Activated B cell treated with CpG ODN at 0.5 μM for 24 hours (primary cell): ENCODE measurements at regions of chr3 and their contacts with region 1.

Region 1: DNA sequence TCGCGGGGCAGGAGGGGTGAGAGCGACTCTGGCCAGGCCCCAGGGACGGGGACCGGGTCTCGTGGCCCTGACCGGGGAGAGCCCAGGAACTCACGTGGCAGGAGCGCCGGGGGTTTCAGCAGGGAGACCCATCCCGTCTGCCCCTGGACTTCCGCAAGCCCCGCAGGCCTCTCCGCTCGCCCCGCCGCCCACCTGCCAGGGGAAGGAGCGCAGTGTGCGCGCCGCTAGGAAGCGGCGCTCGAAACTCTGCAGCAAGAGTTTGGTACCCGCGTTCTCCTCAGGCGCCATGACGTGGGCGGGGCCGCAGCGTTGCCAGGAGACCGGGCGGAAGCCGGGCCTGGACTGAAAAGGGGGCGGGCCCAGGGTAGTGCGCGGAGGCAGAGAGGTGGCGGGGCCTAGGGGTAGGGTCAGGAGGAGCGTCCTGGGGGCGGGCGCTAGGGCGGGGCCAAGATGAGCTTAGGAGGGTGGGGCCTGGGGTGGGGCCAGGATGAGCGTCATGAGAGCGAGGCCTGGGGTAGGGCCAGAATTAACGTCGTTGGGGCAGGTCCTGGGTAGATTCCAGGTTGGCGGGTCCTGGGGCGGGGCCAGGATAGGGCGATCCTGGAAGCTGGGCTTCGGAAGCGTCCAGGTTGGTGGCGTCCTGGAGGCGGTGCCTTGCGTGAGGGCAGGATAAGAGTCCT is 29.7 kb downstream of the ALG1L2 start:
- DNase-seq: peak; percentile 94
- ATAC-seq: peak; percentile 100
- H3K4me3 Mint-ChIP-seq: peak overlapping the region; percentile 98
- H3K27ac Mint-ChIP-seq: peak overlapping the region; percentile 100
- H3K4me1 Mint-ChIP-seq: peaks cover 25% of the 10 kb centered on the region
- H3K27me3 Mint-ChIP-seq: no peaks in the 10 kb centered on the region
- CTCF ChIP-seq: no peak

Region 2: DNA sequence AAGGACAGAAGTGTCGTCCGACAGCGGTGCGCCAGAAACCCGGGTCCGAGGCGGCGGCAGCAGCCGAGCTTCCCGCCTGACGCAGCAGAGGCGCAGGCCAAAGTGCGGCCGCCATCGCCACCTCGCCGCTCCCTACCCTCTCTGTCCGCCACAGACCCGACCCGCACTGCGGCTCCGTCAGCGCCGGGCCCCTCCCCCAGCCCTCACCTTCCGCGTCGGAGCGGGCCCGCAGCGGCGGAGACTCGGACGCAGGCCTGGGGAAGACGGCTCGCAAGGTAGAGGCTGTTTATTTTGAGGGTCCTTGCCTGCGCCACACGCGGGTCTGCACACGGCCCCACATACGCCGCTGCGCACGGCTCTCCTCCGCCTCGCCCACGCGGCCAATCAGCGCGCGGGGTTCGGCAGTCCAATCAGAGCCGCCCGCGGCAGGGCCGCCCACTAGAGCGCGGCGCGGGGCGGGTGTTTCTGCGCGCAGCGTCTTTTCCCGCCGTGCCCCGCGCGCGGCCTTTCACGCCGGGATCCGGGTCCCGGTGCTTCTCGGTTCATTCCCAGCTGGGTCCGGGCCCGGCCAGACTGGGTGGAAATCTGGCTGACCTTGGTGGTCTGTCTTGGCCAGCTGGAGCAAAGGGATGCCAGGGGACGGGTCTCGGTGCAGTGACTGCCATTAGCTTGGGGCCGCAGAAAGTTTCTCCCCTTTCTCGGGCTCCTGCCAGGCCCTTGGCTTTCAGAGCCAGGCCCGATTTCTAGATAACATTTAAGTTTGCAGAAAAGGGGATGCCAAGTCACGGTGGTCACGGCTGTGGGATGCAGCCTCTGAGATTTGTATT is 927.5 kb before region 1 on chr3 and contains the start of gene CNBP:
- CTCF ChIA-PET with region 1: no interaction called
- POLR2A ChIA-PET with region 1: no interaction called
- intact Hi-C with region 1: loop called (anchors 5 kb)
- DNase-seq: peak; percentile 92
- ATAC-seq: peak; percentile 95
- H3K4me3 Mint-ChIP-seq: peak within 1 kb of the TSS; percentile 95
- H3K27ac Mint-ChIP-seq: peak within 1 kb of the TSS; percentile 95
- H3K4me1 Mint-ChIP-seq: peaks cover 50% of the 10 kb centered on the region
- H3K27me3 Mint-ChIP-seq: no peaks in the 10 kb centered on the region
- CTCF ChIP-seq: no peak
- total RNA-seq, gene CNBP: 281 and 303 TPM in 2 replicates

Region 3: GRCh38 chr3:129627429-129628168 is 483.7 kb before region 1 on chr3:
- CTCF ChIA-PET with region 1: no interaction called
- POLR2A ChIA-PET with region 1: no interaction called
- intact Hi-C with region 1: loop called (anchors 5 kb)
- DNase-seq: peak; percentile 48
- ATAC-seq: peak; percentile 65
- H3K4me3 Mint-ChIP-seq: peak overlapping the region; percentile 93
- H3K27ac Mint-ChIP-seq: peak overlapping the region; percentile 76
- H3K4me1 Mint-ChIP-seq: peaks cover 21% of the 10 kb centered on the region
- H3K27me3 Mint-ChIP-seq: no peaks in the 10 kb centered on the region
- CTCF ChIP-seq: no peak

Region 4: GRCh38 chr3:129718201-129718600 is 393.1 kb before region 1 on chr3:
- CTCF ChIA-PET with region 1: no interaction called
- POLR2A ChIA-PET with region 1: no interaction called
- intact Hi-C with region 1: no loop called
- DNase-seq: no peak
- ATAC-seq: no peak
- H3K4me3 Mint-ChIP-seq: no peak overlapping the region
- H3K27ac Mint-ChIP-seq: no peak overlapping the region
- H3K4me1 Mint-ChIP-seq: no peaks in the 10 kb centered on the region
- H3K27me3 Mint-ChIP-seq: no peaks in the 10 kb centered on the region
- CTCF ChIP-seq: no peak

Region 5: DNA sequence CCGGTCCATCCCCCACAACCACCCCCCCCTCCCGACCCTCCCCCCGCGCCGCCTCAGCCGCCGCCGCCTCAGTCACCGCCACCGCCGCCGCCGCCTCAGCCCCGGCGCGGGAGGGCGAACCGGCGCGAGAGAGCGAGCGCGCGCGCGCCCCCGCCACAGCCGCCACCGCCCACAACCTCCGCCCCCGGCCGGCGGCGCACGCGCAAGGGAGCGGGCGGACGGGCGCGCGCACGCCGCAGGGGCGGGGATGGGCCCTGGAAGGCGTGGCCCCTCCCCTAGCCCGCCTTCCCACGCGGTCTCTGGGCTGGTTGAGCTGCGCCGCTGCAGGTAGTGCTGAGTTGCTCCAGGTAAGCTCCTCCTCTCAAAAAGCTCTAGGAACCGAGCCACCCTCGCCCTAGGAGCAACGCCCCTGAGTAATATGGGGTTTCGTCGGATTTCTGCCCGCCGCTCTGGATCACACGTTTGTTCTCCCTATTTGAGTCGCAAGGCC is 217.7 kb before region 1 on chr3 and contains the start of gene TMCC1:
- CTCF ChIA-PET with region 1: no interaction called
- POLR2A ChIA-PET with region 1: interaction called, 4 read pairs
- intact Hi-C with region 1: loop called (anchors 1 kb)
- DNase-seq: peak; percentile 92
- ATAC-seq: peak; percentile 90
- H3K4me3 Mint-ChIP-seq: peak within 1 kb of the TSS; percentile 87
- H3K27ac Mint-ChIP-seq: peak within 1 kb of the TSS; percentile 88
- H3K4me1 Mint-ChIP-seq: peaks cover 34% of the 10 kb centered on the region
- H3K27me3 Mint-ChIP-seq: no peaks in the 10 kb centered on the region
- CTCF ChIP-seq: no peak
- total RNA-seq, gene TMCC1: 25.8 and 25.9 TPM in 2 replicates

Region 6: GRCh38 chr3:130093741-130094391 is 17.5 kb before region 1 on chr3:
- CTCF ChIA-PET with region 1: no interaction called
- POLR2A ChIA-PET with region 1: interaction called, 15 read pairs
- intact Hi-C with region 1: loop called (anchors 1 kb)
- DNase-seq: peak; percentile 44
- ATAC-seq: peak; percentile 45
- H3K4me3 Mint-ChIP-seq: peak overlapping the region; percentile 77
- H3K27ac Mint-ChIP-seq: peak overlapping the region; percentile 79
- H3K4me1 Mint-ChIP-seq: peaks cover 37% of the 10 kb centered on the region
- H3K27me3 Mint-ChIP-seq: no peaks in the 10 kb centered on the region
- CTCF ChIP-seq: no peak

Region 7: GRCh38 chr3:131026321-131027178 is 915.2 kb after region 1 on chr3 and contains the starts of genes ASTE1 and NEK11:
- CTCF ChIA-PET with region 1: no interaction called
- POLR2A ChIA-PET with region 1: no interaction called
- intact Hi-C with region 1: loop called (anchors 5 kb)
- DNase-seq: peak; percentile 89
- ATAC-seq: peak; percentile 97
- H3K4me3 Mint-ChIP-seq: peak within 1 kb of the TSS; percentile 96
- H3K27ac Mint-ChIP-seq: peak within 1 kb of the TSS; percentile 97
- H3K4me1 Mint-ChIP-seq: peaks cover 52% of the 10 kb centered on the region
- H3K27me3 Mint-ChIP-seq: no peaks in the 10 kb centered on the region
- CTCF ChIP-seq: no peak
- total RNA-seq, gene ASTE1: 15.6 and 16.9 TPM in 2 replicates
- total RNA-seq, gene NEK11: 1.5 and 1.9 TPM in 2 replicates